K562 (cell line): ENCODE measurements at regions of chr7 and their contacts with region 1.

Region 1: DNA sequence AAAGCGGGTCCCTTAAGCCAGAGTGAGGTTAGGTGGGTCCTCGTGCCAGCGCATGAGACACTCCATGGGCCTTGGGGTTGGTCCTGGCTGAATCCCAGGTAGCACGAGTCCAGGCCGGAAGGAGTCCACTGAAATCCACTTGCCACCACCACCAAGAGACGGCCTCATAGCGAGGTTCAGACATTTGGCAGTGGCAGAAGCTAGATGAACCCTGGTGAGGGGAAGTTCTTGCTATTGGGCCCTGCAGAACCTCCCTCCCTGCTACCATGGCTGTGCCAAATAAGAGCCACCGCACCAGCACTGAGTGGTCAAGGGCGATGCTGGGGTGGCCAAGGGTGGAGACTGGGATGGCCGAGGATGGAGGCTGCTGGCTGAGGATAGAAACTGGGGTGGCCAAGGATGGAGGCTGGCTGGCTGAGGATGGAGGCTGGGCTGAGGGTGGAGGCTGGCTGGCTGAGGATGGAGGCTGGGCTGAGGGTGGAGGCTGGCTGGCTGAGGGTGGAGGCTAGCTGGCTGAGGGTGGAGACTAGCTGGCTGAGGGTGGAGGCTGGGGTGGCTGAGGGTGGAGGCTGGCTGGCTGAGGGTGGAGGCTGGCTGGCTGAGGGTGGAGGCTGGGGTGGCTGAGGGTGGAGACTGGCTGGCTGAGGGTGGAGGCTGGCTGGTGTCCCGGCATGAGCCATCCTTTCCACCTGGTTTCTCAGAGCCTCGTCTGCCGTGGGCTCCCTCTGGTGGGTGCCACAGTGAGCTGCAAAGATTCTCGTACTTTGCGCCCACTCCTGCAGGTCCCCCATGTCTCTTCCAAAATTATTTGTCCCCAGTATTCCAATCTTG is 88.2 kb downstream of the ELFN1 start:
- DNase-seq: peak in 3 of 4 experiments; percentile 46 to 57 (median 54)
- ATAC-seq: peak; percentile 89
- H3K4me3 ChIP-seq: no peak overlapping the region
- H3K27ac ChIP-seq: no peak overlapping the region
- H3K4me1 ChIP-seq: peaks cover 0 to 23% of the 10 kb centered on the region in 2 experiments; a peak in 2 of 5 replicates
- H3K27me3 ChIP-seq: peaks cover 22 to 62% of the 10 kb centered on the region in 2 experiments; a peak in 4 of 5 replicates
- CTCF ChIP-seq: peak; percentile 57 to 71 (median 65)
- EP300 ChIP-seq: no peak
- POLR2A ChIP-seq: no peak
- RAD21 ChIP-seq: peak in 1 of 2 experiments; percentile 57; a peak in 2 of 4 replicates

Region 2: DNA sequence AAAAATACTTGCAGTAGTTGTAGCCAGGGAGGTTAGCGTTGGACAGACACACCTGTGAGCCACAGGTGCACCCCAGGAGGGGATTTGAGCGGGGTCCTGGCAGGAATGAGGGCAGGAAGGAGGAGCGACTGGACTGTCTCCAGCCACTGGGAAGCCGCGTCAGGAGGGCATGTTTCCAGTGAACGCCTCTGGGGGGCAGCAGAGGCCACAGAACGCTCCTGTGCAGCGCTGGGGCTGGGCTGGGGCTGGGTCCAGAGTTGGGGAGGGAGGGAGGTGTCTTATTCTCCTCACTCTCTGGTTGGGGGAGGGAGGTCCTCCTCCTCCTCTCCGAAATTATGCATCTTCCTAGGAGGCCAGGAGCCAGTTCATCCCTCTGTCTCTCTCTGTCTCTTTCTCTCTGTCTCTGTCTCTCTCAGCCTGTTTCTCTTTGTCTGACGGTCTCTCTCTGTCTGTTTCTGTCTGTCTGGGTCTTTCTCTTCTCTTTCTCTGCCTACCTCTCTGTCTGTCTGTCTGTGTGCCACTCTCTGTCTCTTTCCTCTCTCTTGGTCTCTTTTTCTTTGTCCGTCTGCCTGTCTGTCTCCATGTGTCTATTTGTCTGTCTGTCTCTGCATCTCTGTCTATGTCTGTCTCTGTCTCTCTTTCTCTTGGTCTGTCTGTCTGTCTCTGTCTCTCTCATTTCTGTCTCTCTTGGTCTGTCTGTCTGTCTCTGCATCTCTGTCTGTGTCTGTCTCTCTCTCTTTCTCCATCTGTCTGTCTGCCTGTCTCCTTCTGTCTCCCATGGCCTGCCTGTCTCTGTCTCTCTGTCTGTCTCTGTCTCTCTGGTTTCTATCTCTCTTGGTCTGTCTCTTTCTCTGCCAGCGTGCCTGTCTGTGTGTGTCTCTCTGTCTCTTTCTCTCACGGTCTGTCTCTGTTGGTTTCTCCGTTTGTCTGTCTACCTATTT is 178.5 kb before region 1 on chr7:
- CTCF ChIA-PET with region 1: no interaction called
- POLR2A ChIA-PET with region 1: no interaction called
- in situ Hi-C with region 1: no loop called
- intact Hi-C with region 1: loop called (anchors 2 kb)
- DNase-seq: peak; percentile 81 to 84 (median 83)
- ATAC-seq: peak; percentile 99
- H3K4me3 ChIP-seq: no peak overlapping the region
- H3K27ac ChIP-seq: no peak overlapping the region
- H3K4me1 ChIP-seq: peaks cover 9 to 24% of the 10 kb centered on the region in 2 experiments; a peak in 4 of 5 replicates
- H3K27me3 ChIP-seq: peaks cover 17 to 37% of the 10 kb centered on the region in 2 experiments; a peak in 4 of 5 replicates
- CTCF ChIP-seq: peak; percentile 89 to 92 (median 91)
- EP300 ChIP-seq: no peak
- POLR2A ChIP-seq: no peak
- RAD21 ChIP-seq: peak; percentile 84 to 88

Region 3: GRCh38 chr7:1664711-1665548 is 93.3 kb before region 1 on chr7:
- CTCF ChIA-PET with region 1: no interaction called
- POLR2A ChIA-PET with region 1: no interaction called
- in situ Hi-C with region 1: no loop called
- intact Hi-C with region 1: loop called (anchors 5 kb)
- DNase-seq: peak; percentile 80 to 86 (median 82)
- ATAC-seq: peak; percentile 70
- H3K4me3 ChIP-seq: peak overlapping the region; percentile 42
- H3K27ac ChIP-seq: no peak overlapping the region
- H3K4me1 ChIP-seq: peaks cover 0 to 57% of the 10 kb centered on the region in 2 experiments; a peak in 2 of 5 replicates
- H3K27me3 ChIP-seq: peaks cover 19 to 55% of the 10 kb centered on the region in 2 experiments; a peak in 4 of 5 replicates
- CTCF ChIP-seq: peak; percentile 71 to 99 (median 97)
- EP300 ChIP-seq: no peak
- POLR2A ChIP-seq: no peak
- RAD21 ChIP-seq: peak; percentile 72